ENCODE measurements at regions of chr5 and their contacts with region 1.

Region 1: GRCh38 chr5:143233031-143233430 is 170.5 kb downstream of the NR3C1 start:
- DNase-seq: no peak
- H3K4me3 ChIP-seq: no peak overlapping the region
- H3K27ac ChIP-seq: no peak overlapping the region
- H3K4me1 ChIP-seq: peaks cover 0 to 35% (median 17%) of the 10 kb centered on the region in 4 donors
- H3K27me3 ChIP-seq: no peaks in the 10 kb centered on the region
- CTCF ChIP-seq: no peak

Region 2: GRCh38 chr5:143248822-143249579 is 16.0 kb after region 1 on chr5:
- intact Hi-C with region 1: loop called (anchors 1 kb)
- DNase-seq: no peak
- H3K4me3 ChIP-seq: no peak overlapping the region
- H3K27ac ChIP-seq: no peak overlapping the region
- H3K4me1 ChIP-seq: peaks cover 0 to 18% (median 14%) of the 10 kb centered on the region in 4 donors
- H3K27me3 ChIP-seq: no peaks in the 10 kb centered on the region
- CTCF ChIP-seq: no peak